ENCODE measurements at regions of chr7 and their contacts with region 1.

Region 1: GRCh38 chr7:92366730-92367129 is 80.6 kb upstream of the GATAD1 start:
- DNase-seq: no peak
- H3K4me3 ChIP-seq: no peak overlapping the region
- CTCF ChIP-seq: no peak

Region 2: DNA sequence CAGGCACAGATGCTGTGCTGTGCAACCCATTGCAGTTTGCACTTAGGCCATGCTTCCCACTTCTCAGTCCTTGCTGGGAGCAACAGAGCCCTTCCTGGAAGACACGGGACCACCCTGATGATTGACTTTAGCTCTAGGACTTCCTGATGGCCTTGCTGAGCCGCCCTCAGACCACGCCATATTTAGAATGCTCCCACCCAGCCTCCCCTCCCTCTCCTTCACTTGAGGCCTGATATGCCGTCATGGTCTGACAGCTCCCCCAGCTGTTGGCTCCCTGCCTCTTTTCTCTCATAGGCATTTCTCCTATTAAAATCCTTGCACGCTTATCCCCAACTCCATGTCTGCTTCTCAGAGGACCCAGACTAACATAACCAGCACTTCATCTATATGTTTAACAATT is 51.2 kb after region 1 on chr7:
- in situ Hi-C with region 1: loop called (anchors 5 kb)
- DNase-seq: no peak
- H3K4me3 ChIP-seq: no peak overlapping the region
- CTCF ChIP-seq: no peak